ENCODE measurements at regions of chr5 and their contacts with region 1.

Region 1: GRCh38 chr5:150700594-150701293 is at the start of gene RBM22:
- DNase-seq: peak; percentile 93
- H3K4me3 Mint-ChIP-seq: no peak within 1 kb of the TSS
- H3K27ac Mint-ChIP-seq: no peak within 1 kb of the TSS
- H3K4me1 Mint-ChIP-seq: peaks cover 9% of the 10 kb centered on the region
- H3K27me3 Mint-ChIP-seq: no peaks in the 10 kb centered on the region
- total RNA-seq, gene RBM22: 66.8 to 70.7 TPM

Region 2: DNA sequence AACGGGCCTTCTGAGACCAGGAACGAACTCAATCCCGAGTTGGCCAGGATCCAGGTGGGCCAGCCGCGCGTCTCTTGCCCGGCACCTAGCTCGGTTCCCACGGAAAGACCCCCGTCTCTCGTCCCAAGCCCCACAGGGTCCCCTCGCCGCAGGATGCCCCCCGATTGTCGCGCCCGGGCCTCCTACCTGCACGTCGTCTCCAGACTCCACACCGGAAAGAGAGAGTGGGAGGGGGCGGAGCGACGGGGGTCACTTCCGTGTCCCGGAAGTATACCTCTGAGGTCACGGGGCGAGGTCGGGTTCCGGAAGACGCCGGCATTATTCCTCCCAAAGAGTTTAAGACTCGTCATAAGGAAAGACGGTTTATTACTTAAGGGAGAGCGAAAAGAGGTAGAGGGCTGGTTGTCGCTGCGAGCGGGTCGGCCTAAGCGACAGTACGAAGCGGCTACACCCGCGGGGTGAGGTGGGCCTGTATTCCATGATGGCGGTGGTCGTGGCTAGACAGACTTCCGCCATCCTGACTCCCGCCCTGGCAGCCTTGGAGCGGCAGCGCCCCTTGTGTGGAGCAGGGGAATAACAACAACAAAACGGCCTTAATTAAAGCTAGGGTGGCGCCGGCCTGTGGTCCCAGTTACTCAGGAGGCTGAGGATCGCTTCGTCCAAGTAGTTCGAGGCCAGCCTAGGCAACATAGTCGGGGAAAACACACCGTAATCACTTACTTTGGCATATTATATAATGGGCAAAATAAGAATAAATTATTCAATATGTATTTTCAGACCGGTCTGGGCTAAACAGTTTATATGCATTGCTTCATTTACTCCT is 251.0 kb before region 1 on chr5 and contains the start of gene RPS14:
- CTCF ChIA-PET with region 1: interaction called, 12 read pairs
- POLR2A ChIA-PET with region 1: interaction called, 8 read pairs
- DNase-seq: peak; percentile 95
- H3K4me3 Mint-ChIP-seq: peak within 1 kb of the TSS; percentile 82
- H3K27ac Mint-ChIP-seq: peak within 1 kb of the TSS; percentile 92
- H3K4me1 Mint-ChIP-seq: peaks cover 34% of the 10 kb centered on the region
- H3K27me3 Mint-ChIP-seq: no peaks in the 10 kb centered on the region
- total RNA-seq, gene RPS14: 2,316 to 2,367 TPM

Region 3: DNA sequence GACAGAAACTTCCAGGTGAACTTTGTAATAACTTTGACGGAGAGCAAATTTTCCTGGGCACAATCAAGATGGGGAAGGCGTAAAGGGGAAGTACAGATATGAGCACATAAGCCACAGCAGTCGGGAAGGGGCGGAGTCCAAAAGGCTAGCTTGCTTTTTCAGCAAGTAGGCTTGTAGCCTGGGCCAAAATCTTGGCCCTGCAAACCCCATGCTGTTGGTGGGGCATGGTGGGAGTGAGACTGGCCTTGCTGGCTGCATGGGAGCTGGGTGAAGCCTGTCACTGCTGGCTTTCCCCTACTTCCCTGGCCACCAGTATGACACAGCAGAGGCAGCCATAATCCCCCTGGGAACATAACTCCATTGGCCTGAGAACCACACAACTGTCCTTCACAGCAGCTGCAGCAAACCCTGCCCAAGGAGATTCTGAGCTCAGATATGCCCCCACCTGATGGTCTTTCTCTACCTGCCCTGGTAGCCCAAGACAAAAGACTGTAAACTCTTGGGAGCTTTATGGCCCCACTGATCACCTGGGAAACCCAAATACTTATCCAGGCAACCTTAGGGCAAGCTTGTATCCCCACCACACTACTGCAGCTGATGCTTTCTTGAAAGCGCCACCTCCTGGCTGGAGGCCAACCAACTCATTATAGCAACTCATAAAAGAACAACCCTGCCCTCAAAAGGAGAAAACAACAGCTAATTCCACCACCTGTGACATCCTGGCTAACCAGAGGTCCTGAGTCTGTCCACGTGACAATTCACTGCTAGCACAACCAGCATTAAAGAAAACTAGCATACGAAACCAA is 34.0 kb after region 1 on chr5:
- CTCF ChIA-PET with region 1: interaction called, 15 read pairs
- POLR2A ChIA-PET with region 1: interaction called, 13 read pairs
- DNase-seq: peak; percentile 42
- H3K4me3 Mint-ChIP-seq: no peak overlapping the region
- H3K27ac Mint-ChIP-seq: peak overlapping the region; percentile 47
- H3K4me1 Mint-ChIP-seq: peaks cover 57% of the 10 kb centered on the region
- H3K27me3 Mint-ChIP-seq: no peaks in the 10 kb centered on the region

Region 4: DNA sequence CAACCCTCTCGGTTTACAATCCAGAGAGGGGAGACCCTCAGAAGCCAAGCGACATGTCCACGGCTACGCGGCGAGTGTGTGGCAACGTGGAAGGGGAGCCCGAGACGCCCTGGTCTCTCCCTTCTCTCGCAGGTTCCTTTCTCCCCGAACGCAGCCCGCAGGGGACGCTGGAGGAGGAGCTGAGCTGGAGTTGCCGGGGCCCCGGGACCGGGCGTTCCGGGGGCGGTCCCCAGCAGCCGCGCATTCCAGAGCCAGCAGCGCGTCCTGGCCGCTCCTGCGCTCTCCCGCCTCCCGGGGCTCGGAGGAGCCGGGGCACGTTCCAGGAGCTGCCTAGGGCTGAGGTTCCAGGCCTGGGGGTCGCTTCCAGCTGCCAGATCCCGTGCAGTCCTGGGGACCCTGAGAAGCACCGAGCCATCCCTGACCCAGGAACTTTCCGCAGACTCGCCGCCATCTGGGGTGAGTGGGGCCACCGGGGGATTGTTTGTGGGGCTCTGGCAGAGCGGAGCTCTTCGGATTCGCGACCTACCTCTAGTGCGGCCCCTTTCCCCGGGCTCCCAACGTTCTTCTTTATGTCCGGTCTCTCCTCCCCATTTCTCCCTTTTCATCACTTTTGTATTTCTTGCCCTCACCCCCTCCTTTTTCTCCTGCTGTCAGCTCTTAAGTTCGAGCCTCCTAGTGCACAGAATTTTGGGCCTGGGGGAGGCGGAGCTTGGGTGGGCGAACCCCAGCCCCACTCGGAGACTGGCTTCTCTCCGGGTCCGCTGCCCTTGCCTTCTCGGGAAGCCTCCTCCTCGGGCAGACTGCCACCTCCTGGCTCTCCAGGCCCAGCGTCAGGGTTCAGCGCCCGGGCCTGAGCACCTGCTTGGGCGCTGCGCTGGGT is 78.0 kb after region 1 on chr5 and contains the start of gene SMIM3:
- CTCF ChIA-PET with region 1: interaction called, 108 read pairs
- POLR2A ChIA-PET with region 1: interaction called, 34 read pairs
- DNase-seq: peak; percentile 76
- H3K4me3 Mint-ChIP-seq: peak within 1 kb of the TSS; percentile 93
- H3K27ac Mint-ChIP-seq: peak within 1 kb of the TSS; percentile 89
- H3K4me1 Mint-ChIP-seq: peaks cover 61% of the 10 kb centered on the region
- H3K27me3 Mint-ChIP-seq: no peaks in the 10 kb centered on the region
- total RNA-seq, gene SMIM3: 17.4 to 19.1 TPM

Region 5: DNA sequence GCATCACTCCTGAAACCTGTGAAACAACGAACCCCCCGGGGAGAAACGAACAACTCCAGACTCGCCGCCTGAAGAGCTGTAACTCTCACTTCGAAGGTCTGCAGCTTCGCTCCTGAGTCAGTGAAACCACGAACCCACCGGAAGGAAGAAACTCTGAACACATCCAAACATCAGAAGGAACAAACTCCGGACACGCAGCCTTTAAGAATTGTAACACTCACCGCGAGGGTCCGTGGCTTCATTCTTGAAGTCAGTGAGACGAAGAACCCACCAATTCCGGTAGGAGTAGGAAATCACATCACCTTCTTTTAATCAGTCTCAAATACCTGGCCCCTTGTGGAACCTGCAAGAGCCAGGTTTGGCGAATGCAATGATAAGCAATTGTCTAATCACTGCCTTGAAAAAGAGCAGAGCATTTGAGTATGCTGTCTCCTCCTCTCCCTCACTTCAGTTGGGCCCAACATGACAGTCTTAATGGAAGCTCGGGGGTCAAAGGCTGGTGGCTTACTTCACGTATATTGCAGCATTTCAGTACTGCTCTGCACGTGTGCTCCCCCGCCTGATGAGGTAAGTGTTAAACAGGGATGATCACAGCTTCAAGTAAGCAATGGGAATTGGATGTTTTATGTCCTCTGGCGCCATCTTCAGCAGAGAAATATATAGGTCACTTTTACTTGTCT is 146.1 kb after region 1 on chr5:
- CTCF ChIA-PET with region 1: interaction called, 34 read pairs
- POLR2A ChIA-PET with region 1: interaction called, 24 read pairs
- DNase-seq: peak; percentile 70
- H3K4me3 Mint-ChIP-seq: peak overlapping the region; percentile 68
- H3K27ac Mint-ChIP-seq: peak overlapping the region; percentile 88
- H3K4me1 Mint-ChIP-seq: peaks cover 22% of the 10 kb centered on the region
- H3K27me3 Mint-ChIP-seq: peaks cover 6% of the 10 kb centered on the region

Measured in activated CD4-positive, alpha-beta memory T cell treated with anti-CD3 and anti-CD28 coated beads, Interleukin-2, amount 10 ng/mL, durations not matched to agents 7 days and 5 days (primary cell).